ENCODE measurements at regions of chr20 and their contacts with region 1.

Region 1: DNA sequence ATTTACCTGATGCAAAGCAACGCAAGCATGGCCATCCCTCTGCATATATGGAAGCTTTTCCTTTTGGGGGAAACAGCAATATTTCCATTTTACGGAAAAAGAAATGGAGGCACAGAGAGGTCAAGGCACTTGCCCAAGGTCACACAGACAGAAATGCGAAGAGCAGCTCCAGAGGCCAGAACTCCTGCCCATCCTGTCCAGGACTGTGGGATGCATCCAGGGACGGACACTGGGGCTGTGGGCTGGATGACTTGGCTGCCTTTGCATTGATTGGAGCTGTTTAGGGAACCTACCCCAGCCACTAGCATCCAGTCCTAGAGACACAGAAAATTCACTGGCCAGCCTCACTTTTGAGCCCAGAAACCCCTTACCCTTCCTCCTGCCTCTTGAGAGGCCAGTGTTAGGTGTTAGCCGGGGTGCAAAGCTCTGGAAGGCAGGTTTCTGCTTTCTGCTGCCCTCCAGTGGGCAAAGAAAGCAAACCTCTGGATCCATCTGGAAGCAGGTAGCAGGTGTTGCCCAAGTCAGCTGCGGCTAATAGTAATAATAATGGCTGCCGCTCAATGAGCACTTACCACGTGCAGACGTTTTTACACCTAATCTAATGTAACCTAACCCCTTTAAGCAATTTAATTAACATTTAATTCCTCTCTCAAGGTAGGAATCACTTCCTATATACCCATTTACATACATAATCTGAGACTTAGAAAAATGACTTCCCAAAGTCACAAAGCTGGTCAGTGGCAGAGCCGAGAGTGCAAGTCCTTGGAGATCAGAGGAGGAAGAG is 31.7 kb upstream of the CCN5 start:
- DNase-seq: peak in 6 of 9 donors; percentile 21 to 68 (median 44)
- ATAC-seq: peak; percentile 77
- H3K4me3 ChIP-seq: no peak overlapping the region
- H3K4me3 Mint-ChIP-seq: no peak overlapping the region
- H3K27ac ChIP-seq: no peak overlapping the region
- H3K27ac Mint-ChIP-seq: peak overlapping the region in 1 of 9 donors; percentile 61
- H3K4me1 ChIP-seq: no peaks in the 10 kb centered on the region
- H3K4me1 Mint-ChIP-seq: peaks cover 5 to 15% (median 9%) of the 10 kb centered on the region in 7 donors
- H3K27me3 ChIP-seq: no peaks in the 10 kb centered on the region
- H3K27me3 Mint-ChIP-seq: peaks cover 0 to 6% (median 0%) of the 10 kb centered on the region in 5 donors

Region 2: DNA sequence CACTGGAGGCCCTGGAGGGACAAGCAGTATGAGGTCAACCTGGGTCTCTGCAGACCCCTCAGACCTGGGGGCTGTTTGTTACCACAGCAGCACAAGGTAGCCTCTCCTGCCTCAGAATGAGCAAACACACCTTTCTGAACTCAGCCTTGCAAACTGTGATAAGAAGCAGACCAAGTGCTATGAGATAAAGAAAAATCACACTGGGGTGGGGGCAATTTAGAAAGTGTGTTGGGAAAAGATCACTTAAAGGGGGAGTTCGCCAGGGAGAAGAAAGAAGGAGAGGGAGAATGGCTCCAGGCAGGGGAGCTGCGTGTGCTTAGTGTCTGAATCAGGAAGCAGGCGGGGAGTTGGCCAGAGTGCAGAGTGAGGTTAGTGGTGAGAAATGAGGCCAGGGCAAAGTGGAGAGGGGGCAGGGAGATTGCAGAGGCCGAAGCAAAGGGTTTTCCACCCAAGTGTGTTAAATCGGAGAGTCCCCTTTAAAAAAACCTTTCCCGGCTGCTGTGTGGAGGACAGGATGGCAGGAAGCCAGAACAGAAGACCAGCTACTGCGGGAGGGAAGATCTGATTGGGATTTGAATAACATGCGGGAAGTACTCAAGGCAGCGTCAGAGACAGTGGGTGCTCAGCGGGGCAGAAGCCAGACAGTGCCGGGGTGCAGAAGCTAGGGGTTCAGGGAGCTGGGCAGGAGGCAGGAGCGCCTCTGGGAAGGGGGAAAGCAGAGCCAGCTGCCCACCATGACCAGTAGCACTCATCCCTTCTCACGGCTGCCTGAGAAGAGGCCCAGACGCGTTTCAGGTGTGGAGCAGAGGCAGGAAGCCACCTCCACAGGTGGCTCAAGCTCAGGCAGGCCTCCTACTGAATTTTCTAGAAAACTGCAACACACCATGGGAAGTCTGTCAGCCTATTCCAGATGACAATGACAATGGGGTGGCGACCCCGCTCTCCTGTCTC is 41.0 kb before region 1 on chr20:
- CTCF ChIA-PET with region 1: interaction called, 20 read pairs
- POLR2A ChIA-PET with region 1: no interaction called
- intact Hi-C with region 1: loop called (anchors 2 to 5 kb)
- DNase-seq: peak in 8 of 9 donors; percentile 28 to 54 (median 41)
- ATAC-seq: peak; percentile 33
- H3K4me3 ChIP-seq: peak overlapping the region; percentile 47
- H3K4me3 Mint-ChIP-seq: peak overlapping the region; percentile 63 to 96 (median 76)
- H3K27ac ChIP-seq: peak overlapping the region; percentile 76
- H3K27ac Mint-ChIP-seq: peak overlapping the region; percentile 90 to 98 (median 96)
- H3K4me1 ChIP-seq: peaks cover 53 to 70% of the 10 kb centered on the region in 2 donors
- H3K4me1 Mint-ChIP-seq: peaks cover 55 to 82% (median 70%) of the 10 kb centered on the region in 7 donors
- H3K27me3 ChIP-seq: no peaks in the 10 kb centered on the region
- H3K27me3 Mint-ChIP-seq: no peaks in the 10 kb centered on the region

Region 3: DNA sequence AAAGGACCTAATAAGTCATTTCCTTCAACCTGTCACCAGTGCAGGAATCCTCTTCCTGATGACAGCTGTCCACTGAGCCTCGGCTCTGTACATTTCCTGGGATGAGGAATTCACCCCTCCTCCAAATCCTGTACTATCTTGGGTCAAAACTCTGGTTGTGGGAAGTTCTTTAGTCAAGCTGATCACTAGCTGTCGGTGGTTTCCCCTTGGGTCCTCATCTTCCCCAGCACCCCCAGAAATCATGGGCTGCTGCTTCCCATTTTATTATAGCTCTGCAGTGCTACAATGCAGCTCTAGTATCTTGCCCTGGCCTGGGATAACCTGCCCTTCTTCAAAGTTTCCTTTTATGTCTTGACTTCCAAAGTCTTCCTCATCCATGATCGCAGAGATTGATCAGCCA is 17.4 kb before region 1 on chr20:
- CTCF ChIA-PET with region 1: interaction called, 5 read pairs
- POLR2A ChIA-PET with region 1: interaction called, 5 read pairs
- intact Hi-C with region 1: loop called in 1 of 2 experiments (anchors 1 kb)
- DNase-seq: no peak
- ATAC-seq: no peak
- H3K4me3 ChIP-seq: no peak overlapping the region
- H3K4me3 Mint-ChIP-seq: no peak overlapping the region
- H3K27ac ChIP-seq: no peak overlapping the region
- H3K27ac Mint-ChIP-seq: peak overlapping the region in 2 of 9 donors; percentile 5 to 56
- H3K4me1 ChIP-seq: peaks cover 0 to 7% of the 10 kb centered on the region in 2 donors
- H3K4me1 Mint-ChIP-seq: peaks cover 12 to 29% (median 20%) of the 10 kb centered on the region in 7 donors
- H3K27me3 ChIP-seq: no peaks in the 10 kb centered on the region
- H3K27me3 Mint-ChIP-seq: no peaks in the 10 kb centered on the region

Region 4: DNA sequence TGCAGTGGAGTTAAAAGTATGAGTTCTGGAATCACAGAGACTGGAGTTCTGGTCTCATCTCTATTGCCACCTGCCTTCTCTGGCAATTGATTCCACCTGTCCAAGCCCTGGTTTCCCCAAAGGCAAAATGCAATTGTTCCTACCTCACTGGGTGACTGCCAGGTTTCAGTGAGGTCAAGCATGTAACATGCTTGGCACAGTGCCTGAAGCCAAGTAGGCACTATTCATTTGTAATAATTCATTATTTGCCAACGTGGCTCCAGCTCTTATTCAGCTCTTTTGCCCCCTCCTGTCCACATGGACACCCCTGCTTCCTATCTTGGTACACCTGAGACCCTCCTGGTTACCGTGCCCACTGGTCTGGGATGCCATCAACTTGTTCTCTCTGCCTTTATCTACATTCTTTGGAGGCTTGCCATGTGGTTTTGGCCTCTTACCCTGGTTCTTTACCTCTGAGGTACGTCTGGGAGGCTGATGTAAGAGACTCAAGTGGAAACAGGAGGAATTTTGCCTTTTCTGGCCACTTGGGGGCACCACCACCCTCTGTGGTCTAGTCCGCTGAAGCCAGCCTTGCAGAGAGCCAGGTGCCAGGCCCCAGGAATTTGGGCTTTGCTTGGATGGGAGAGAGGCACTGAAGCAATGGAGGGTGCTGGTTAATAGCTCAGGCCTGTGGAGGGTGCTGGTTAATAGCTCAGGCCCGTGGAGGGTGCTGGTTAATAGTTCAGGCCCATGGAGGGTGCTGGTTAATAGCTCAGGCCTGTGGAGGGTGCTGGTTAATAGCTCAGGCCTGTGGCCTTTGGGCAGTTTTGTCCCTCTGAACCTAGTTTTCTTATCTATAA is 63.9 kb after region 1 on chr20:
- CTCF ChIA-PET with region 1: no interaction called
- POLR2A ChIA-PET with region 1: no interaction called
- intact Hi-C with region 1: loop called in 1 of 2 experiments (anchors 5 kb)
- DNase-seq: peak in 8 of 9 donors; percentile 28 to 53 (median 42)
- ATAC-seq: peak; percentile 59
- H3K4me3 ChIP-seq: no peak overlapping the region
- H3K4me3 Mint-ChIP-seq: peak overlapping the region; percentile 28 to 83 (median 69)
- H3K27ac ChIP-seq: no peak overlapping the region
- H3K27ac Mint-ChIP-seq: peak overlapping the region in 3 of 9 donors; percentile 9 to 80 (median 29)
- H3K4me1 ChIP-seq: peaks cover 0 to 6% of the 10 kb centered on the region in 2 donors
- H3K4me1 Mint-ChIP-seq: peaks cover 9 to 18% (median 16%) of the 10 kb centered on the region in 7 donors
- H3K27me3 ChIP-seq: peaks cover 0 to 4% of the 10 kb centered on the region in 2 donors
- H3K27me3 Mint-ChIP-seq: peaks cover 10 to 41% (median 31%) of the 10 kb centered on the region in 5 donors

Region 5: DNA sequence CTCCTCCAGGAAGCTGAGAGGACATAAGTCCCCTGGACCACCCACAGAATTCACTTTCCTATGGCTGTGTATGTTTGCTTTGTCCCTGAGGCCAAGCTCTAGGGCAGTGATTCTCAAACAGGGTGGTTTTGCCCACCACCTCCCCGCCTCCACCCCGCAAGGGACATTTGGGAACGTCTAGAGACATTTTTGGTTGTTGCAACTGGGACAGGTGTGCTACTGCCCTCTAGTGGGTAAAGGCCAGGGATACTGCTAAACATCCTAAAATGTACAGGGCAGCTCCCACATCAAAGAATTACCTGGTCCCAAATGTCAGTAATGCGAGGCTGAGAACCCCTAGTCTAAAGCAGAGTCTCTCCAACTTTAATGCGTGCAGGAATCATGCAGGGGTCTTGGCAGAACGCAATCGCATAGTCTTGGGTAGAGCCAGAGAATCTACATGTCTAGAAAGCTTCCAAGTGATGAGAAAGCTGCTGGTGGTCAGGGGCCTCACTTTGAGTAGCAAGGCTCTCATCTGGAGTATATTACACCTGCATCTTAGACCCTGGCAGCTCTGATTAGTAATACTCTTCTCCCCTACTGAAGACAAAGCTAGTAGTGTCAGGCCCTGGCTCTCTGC is 412.4 kb after region 1 on chr20:
- CTCF ChIA-PET with region 1: no interaction called
- POLR2A ChIA-PET with region 1: no interaction called
- intact Hi-C with region 1: loop called in 1 of 2 experiments (anchors 2 kb)
- DNase-seq: peak in 8 of 9 donors; percentile 28 to 68 (median 58)
- ATAC-seq: peak; percentile 76
- H3K4me3 ChIP-seq: no peak overlapping the region
- H3K4me3 Mint-ChIP-seq: peak overlapping the region in 1 of 10 donors; percentile 29
- H3K27ac ChIP-seq: no peak overlapping the region
- H3K27ac Mint-ChIP-seq: peak overlapping the region in 2 of 9 donors; percentile 30 to 41
- H3K4me1 ChIP-seq: peaks cover 0 to 8% of the 10 kb centered on the region in 2 donors
- H3K4me1 Mint-ChIP-seq: peaks cover 5 to 24% (median 15%) of the 10 kb centered on the region in 7 donors
- H3K27me3 ChIP-seq: peaks cover 7 to 21% of the 10 kb centered on the region in 2 donors
- H3K27me3 Mint-ChIP-seq: peaks cover 32 to 38% (median 33%) of the 10 kb centered on the region in 5 donors

Region 6: GRCh38 chr20:46108435-46108841 is 1425.0 kb after region 1 on chr20:
- CTCF ChIA-PET with region 1: no interaction called
- POLR2A ChIA-PET with region 1: no interaction called
- intact Hi-C with region 1: no loop called
- DNase-seq: no peak
- ATAC-seq: peak; percentile 57
- H3K4me3 ChIP-seq: no peak overlapping the region
- H3K4me3 Mint-ChIP-seq: no peak overlapping the region
- H3K27ac ChIP-seq: no peak overlapping the region
- H3K27ac Mint-ChIP-seq: no peak overlapping the region
- H3K4me1 ChIP-seq: no peaks in the 10 kb centered on the region
- H3K4me1 Mint-ChIP-seq: peaks cover 0 to 14% (median 0%) of the 10 kb centered on the region in 7 donors
- H3K27me3 ChIP-seq: peaks cover 5 to 6% of the 10 kb centered on the region in 2 donors
- H3K27me3 Mint-ChIP-seq: peaks cover 43 to 66% (median 54%) of the 10 kb centered on the region in 5 donors